Activated CD8-positive, alpha-beta T cell treated with anti-CD3 and anti-CD28 coated beads, Interleukin-2, amount 10 ng/mL, durations not matched to agents 7 days and 5 days (primary cell): ENCODE measurements at regions of chr7 and their contacts with region 1.

Region 1: DNA sequence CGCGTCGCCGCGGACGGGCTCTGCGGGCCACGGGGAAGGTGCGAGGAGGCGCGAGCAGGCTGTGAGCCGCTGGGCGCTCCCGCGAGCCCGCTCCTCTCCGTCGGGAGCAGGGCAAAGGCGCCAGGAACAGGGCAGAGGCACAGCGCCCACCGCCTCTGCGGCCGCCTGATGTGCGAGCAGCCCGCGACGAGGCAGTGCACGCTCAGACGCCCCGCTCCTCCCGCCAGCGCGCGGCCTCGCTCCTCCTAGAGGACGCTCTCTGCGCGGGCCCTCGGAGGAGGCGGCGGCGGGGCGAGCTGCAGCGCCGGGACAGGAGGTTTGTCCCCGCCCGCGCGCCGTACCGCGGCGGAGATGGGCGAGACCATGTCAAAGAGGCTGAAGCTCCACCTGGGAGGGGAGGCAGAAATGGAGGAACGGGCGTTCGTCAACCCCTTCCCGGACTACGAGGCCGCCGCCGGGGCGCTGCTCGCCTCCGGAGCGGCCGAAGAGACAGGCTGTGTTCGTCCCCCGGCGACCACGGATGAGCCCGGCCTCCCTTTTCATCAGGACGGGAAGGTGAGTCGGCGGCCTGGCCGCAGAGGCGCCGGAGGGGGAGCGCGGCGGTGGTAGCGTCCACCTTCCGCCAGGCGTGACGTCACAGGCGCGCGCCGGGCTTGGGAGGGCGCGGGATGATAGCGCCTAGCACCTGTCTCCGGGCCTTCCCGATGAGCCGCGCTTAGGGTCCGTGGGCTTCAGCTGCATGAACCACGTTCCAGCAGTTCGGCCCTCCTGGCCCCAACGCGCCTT is 731 bp downstream of the LANCL2 start:
- DNase-seq: peak; percentile 94
- ATAC-seq: peak; percentile 88
- H3K4me3 Mint-ChIP-seq: peak overlapping the region; percentile 92
- H3K27ac Mint-ChIP-seq: peak overlapping the region; percentile 98
- H3K4me1 Mint-ChIP-seq: peaks cover 34% of the 10 kb centered on the region
- H3K27me3 Mint-ChIP-seq: no peaks in the 10 kb centered on the region

Region 2: GRCh38 chr7:55309040-55309991 is 56.6 kb before region 1 on chr7:
- CTCF ChIA-PET with region 1: interaction called, 14 read pairs
- POLR2A ChIA-PET with region 1: interaction called, 18 read pairs
- DNase-seq: peak; percentile 85
- ATAC-seq: peak; percentile 89
- H3K4me3 Mint-ChIP-seq: peak overlapping the region; percentile 26
- H3K27ac Mint-ChIP-seq: peak overlapping the region; percentile 45
- H3K4me1 Mint-ChIP-seq: peaks cover 42% of the 10 kb centered on the region
- H3K27me3 Mint-ChIP-seq: peaks cover 29% of the 10 kb centered on the region

Region 3: GRCh38 chr7:55339033-55340000 is 26.6 kb before region 1 on chr7:
- CTCF ChIA-PET with region 1: no interaction called
- POLR2A ChIA-PET with region 1: no interaction called
- DNase-seq: no peak
- ATAC-seq: no peak
- H3K4me3 Mint-ChIP-seq: no peak overlapping the region
- H3K27ac Mint-ChIP-seq: no peak overlapping the region
- H3K4me1 Mint-ChIP-seq: no peaks in the 10 kb centered on the region
- H3K27me3 Mint-ChIP-seq: no peaks in the 10 kb centered on the region

Region 4: DNA sequence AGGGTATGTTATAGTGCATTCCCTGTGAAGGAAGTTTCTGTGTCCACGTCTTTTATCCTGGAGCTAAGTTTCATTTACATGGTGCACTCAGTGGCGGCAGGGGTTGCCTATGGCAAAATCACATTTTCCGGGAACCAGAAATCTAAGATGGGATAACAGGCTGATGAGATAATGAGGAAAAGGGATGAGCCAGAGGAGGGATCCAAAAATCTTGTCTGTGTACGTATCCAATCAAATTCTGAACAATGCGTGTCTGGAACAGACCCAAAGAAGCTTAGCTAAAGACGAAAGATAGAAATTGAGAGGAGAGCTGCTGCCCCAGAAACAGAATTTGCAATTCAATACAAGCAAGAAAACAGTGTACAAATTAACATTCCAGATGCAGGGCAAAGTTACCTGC is 15.3 kb after region 1 on chr7:
- CTCF ChIA-PET with region 1: no interaction called
- POLR2A ChIA-PET with region 1: no interaction called
- DNase-seq: no peak
- ATAC-seq: no peak
- H3K4me3 Mint-ChIP-seq: no peak overlapping the region
- H3K27ac Mint-ChIP-seq: no peak overlapping the region
- H3K4me1 Mint-ChIP-seq: no peaks in the 10 kb centered on the region
- H3K27me3 Mint-ChIP-seq: no peaks in the 10 kb centered on the region